Activated naive CD4-positive, alpha-beta T cell treated with anti-CD3 and anti-CD28 coated beads for 36 hours (primary cell): ENCODE measurements at regions of chr6 and their contacts with region 1.

Region 1: GRCh38 chr6:111011360-111012142 is 29.7 kb downstream of the RPF2 start:
- DNase-seq: no peak
- H3K4me3 Mint-ChIP-seq: no peak overlapping the region
- H3K27ac Mint-ChIP-seq: no peak overlapping the region
- H3K4me1 Mint-ChIP-seq: peaks cover 6% of the 10 kb centered on the region
- H3K27me3 Mint-ChIP-seq: no peaks in the 10 kb centered on the region

Region 2: DNA sequence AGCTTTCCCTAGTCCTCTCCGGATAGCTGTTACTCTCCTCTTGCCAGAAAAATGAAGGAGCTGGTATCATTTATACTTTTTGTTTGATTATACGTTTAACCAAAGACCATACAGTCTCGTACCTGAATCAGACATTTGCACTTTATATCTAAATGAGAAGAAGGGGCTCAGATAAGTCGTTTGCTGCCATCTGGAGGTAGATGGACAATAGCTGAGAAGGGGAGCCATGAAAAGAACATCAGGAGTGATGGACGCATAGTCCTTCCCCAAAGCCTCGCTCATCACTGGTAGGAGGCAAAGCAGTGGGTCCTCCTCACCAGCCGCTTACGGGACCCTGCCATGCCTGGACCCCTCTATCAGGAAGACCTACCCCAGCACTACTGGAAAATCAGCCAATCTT is 15.7 kb after region 1 on chr6:
- CTCF ChIA-PET with region 1: interaction called, 10 read pairs
- intact Hi-C with region 1: no loop called
- DNase-seq: no peak
- H3K4me3 Mint-ChIP-seq: no peak overlapping the region
- H3K27ac Mint-ChIP-seq: no peak overlapping the region
- H3K4me1 Mint-ChIP-seq: no peaks in the 10 kb centered on the region
- H3K27me3 Mint-ChIP-seq: no peaks in the 10 kb centered on the region

Region 3: GRCh38 chr6:111057074-111057752 is 45.7 kb after region 1 on chr6:
- CTCF ChIA-PET with region 1: interaction called, 10 read pairs
- intact Hi-C with region 1: no loop called
- DNase-seq: no peak
- H3K4me3 Mint-ChIP-seq: no peak overlapping the region
- H3K27ac Mint-ChIP-seq: no peak overlapping the region
- H3K4me1 Mint-ChIP-seq: no peaks in the 10 kb centered on the region
- H3K27me3 Mint-ChIP-seq: no peaks in the 10 kb centered on the region